ENCODE measurements at regions of chr16 and their contacts with region 1.

Region 1: DNA sequence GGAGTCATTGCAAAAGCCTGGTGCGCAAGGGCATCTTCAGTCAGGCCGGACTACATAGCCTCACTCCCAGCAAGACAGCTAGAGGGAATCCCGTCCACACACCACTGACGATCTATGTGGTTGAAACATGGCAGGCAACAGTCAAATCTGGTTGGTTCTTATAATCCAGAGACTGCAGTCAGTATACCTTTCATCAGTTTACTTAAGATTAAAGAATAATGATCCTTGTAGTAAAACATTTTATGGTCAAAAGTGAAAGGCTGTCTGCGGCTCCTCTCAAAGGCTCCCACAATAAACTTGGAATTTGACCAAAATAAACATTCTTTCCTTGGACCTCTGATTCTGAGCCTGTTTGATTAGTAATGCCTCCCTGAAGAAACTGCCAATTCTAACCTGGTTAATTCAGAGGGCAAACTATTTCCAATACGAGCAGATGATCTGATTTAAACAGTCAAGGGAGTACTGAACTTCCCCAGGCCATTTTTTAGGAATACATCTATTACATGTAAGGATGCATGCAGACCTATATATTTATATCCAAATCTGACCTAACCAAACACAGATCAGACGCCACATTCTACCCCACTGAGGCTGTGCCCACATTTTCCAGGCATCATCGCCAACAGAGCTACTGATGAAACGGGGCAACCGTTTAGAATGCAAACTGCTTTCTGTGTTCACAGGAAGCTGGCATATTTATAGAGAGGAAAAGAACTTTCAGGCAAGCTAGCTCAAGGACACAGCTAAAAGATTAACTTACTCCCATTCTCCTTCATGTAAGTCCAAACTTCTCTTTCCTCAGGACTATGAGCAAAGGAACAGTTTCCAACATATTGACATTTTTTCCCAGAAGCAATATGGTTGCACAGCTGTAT is 15.3 kb upstream of the TXNDC11 start:
- DNase-seq: no peak
- ATAC-seq: no peak
- H3K4me3 ChIP-seq: no peak overlapping the region
- H3K4me3 Mint-ChIP-seq: no peak overlapping the region
- H3K27ac ChIP-seq: no peak overlapping the region
- H3K27ac Mint-ChIP-seq: peak overlapping the region in 1 of 2 donors; percentile 34
- H3K4me1 ChIP-seq: no peaks in the 10 kb centered on the region
- H3K4me1 Mint-ChIP-seq: no peaks in the 10 kb centered on the region
- H3K27me3 ChIP-seq: no peaks in the 10 kb centered on the region
- H3K27me3 Mint-ChIP-seq: no peaks in the 10 kb centered on the region

Region 2: DNA sequence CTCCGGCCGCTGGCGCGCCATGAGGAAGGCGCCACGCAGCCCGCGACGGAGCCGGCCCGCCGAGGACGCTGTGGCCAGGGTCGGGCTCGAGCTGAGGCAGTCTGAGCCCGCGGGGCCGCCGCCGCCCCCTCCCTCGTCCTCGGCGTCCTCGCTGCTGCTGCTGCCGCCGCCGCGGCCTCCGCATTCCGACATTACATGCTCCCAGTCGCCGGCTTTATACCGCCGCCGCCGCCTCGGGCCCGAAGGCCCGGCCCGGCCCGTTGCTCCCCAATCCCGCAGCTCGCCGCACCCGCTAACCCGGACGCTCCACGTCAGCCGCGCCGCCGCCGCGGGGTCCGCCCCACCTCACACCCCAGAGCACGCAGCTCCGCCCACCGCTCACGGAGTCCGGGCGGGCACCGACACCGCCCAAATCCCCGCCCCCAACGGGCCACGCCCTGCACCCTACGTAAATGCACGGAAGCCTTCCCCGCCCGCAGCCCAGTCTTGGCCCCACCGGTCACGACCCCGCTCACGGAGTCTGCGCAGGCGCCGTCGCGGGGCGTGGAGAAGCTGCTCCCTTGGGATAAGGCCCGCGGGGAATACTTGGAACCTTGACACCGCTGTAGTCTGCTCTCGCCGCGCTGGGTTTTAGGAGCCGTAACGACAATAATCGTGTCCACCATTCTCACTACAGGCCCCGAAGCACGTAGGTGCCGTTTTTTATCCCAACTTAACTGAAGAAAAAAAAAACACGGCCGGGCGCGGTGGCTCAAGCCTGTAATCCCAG is 15.2 kb before region 1 on chr16 and contains the start of gene TXNDC11:
- CTCF ChIA-PET with region 1: no interaction called
- POLR2A ChIA-PET with region 1: interaction called in 1 of 2 experiments, 13 read pairs
- DNase-seq: peak; percentile 96 to 100 (median 99)
- ATAC-seq: peak; percentile 91 to 97 (median 93)
- H3K4me3 ChIP-seq: peak within 1 kb of the TSS; percentile 62 to 86
- H3K4me3 Mint-ChIP-seq: peak within 1 kb of the TSS; percentile 90 to 96 (median 94)
- H3K27ac ChIP-seq: peak within 1 kb of the TSS; percentile 97
- H3K27ac Mint-ChIP-seq: peak within 1 kb of the TSS; percentile 93 to 96
- H3K4me1 ChIP-seq: peaks cover 5 to 47% of the 10 kb centered on the region in 2 experiments
- H3K4me1 Mint-ChIP-seq: peaks cover 51 to 57% (median 53%) of the 10 kb centered on the region in 3 donors
- H3K27me3 ChIP-seq: no peaks in the 10 kb centered on the region
- H3K27me3 Mint-ChIP-seq: no peaks in the 10 kb centered on the region
- total RNA-seq, gene TXNDC11: 44.0 to 76.3 (median 54.0) TPM

Region 3: DNA sequence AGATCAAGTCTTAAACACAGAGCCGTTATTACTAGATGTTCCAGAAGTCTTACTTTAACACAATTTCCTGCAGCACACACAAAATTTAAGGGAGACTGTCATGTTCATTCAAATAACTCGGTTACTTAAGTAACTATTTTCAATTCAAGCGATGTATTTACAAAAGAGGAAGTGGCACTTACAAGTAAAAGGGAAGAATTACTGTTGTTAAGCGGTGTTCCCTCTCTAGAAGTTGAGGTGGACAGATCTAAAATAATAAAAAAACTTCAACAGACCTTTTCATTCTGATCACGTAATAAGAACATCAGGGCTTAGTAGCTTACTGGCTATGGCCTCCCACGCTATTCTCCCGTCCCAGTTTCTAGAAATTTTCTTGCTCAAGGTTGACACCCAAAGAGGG is 10.9 kb after region 1 on chr16:
- CTCF ChIA-PET with region 1: no interaction called
- POLR2A ChIA-PET with region 1: interaction called, 3 to 12 read pairs
- DNase-seq: no peak
- ATAC-seq: no peak
- H3K4me3 ChIP-seq: no peak overlapping the region
- H3K4me3 Mint-ChIP-seq: peak overlapping the region in 1 of 3 donors; percentile 7
- H3K27ac ChIP-seq: no peak overlapping the region
- H3K27ac Mint-ChIP-seq: peak overlapping the region; percentile 62
- H3K4me1 ChIP-seq: no peaks in the 10 kb centered on the region
- H3K4me1 Mint-ChIP-seq: peaks cover 7 to 16% (median 8%) of the 10 kb centered on the region in 3 donors
- H3K27me3 ChIP-seq: no peaks in the 10 kb centered on the region
- H3K27me3 Mint-ChIP-seq: no peaks in the 10 kb centered on the region

Measured in T-cell (primary cell).